Activated CD8-positive, alpha-beta T cell treated with anti-CD3 and anti-CD28 coated beads, Interleukin-2, amount 10 ng/mL, durations not matched to agents 7 days and 5 days (primary cell): ENCODE measurements at regions of chr14 and their contacts with region 1.

Region 1: DNA sequence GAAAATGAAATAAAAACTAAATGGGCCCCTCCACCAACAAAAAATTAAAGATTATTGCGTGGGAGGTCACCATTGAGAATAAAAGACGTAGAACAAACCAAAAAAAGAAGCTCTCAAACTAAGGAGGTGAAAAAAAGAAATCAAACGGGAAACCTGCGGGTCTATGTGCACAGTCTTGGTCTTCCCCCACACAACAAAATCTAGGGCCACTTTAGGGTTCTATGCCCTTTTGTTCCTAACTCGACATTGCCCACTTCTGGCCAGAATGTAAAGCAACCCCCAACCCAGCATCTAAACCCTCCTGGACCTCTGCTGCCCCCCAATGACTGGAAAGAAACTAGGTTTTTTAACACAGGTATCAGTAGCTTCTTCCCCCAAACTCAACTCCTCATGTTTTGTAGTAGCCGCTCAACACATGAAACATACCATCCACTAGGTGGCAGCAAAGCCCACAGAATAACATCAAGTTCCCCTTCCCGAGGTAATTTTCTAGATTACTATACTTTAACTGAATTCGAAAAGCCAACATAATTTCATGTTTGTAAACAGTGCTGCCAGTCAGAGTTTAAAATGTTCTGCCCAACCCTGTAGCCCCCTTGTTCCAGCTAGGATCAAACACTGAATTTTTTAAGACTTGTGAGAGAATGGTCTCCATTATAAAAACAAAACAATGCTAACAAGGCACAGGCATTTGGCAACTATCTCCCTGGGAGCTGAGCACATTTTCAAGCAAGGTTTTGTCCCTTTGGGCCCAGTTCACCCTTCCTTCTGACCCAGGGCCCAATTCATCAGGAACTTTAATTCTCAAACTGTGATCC is 18.7 kb downstream of the DAD1 start:
- DNase-seq: peak; percentile 94
- ATAC-seq: peak; percentile 87
- H3K4me3 Mint-ChIP-seq: peak overlapping the region; percentile 80
- H3K27ac Mint-ChIP-seq: peak overlapping the region; percentile 92
- H3K4me1 Mint-ChIP-seq: peaks cover 62% of the 10 kb centered on the region
- H3K27me3 Mint-ChIP-seq: no peaks in the 10 kb centered on the region

Region 2: DNA sequence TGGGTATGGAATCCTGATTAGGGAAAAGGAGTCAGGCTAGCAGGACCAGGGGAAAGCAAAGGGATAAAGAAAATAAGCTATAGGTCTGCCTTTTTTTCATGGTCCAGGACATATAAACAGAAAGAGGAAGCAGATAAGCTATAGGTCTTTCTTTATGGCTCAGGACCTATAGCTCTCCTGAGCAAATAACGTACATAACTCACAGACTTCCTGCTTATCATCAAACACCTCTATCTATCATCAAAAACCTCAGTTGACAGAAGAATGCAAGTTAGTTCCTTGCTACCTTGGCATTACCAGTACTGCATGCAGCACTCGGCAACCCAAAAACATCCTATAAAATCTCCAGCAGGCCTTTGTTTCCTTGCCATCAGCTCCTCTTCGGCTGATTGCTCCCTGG is 658.0 kb before region 1 on chr14:
- CTCF ChIA-PET with region 1: interaction called, 70 read pairs
- POLR2A ChIA-PET with region 1: interaction called, 15 read pairs
- DNase-seq: no peak
- ATAC-seq: no peak
- H3K4me3 Mint-ChIP-seq: no peak overlapping the region
- H3K27ac Mint-ChIP-seq: no peak overlapping the region
- H3K4me1 Mint-ChIP-seq: peaks cover 38% of the 10 kb centered on the region
- H3K27me3 Mint-ChIP-seq: peaks cover 4% of the 10 kb centered on the region

Region 3: DNA sequence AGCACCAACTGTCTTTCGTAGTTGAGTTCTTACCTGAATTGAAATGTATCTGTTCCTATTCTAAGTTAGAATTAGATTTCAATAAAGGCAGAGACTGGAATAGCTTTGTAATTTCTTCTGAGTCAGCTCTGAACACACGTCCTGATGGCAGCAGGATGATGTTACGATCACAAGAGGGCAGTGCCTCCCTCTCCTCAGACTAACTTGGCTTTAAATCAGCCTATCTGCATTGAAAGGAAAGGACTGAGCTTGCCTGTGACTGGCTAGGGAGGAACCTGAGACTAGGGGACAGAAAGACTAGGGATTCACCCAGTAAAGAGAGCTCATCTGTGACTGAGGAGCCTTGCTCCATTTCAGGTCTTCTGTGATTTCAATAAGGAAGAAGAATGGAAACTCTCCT is 573.0 kb before region 1 on chr14:
- CTCF ChIA-PET with region 1: interaction called, 46 read pairs
- POLR2A ChIA-PET with region 1: interaction called, 5 read pairs
- DNase-seq: peak; percentile 63
- ATAC-seq: peak; percentile 91
- H3K4me3 Mint-ChIP-seq: peak overlapping the region; percentile 87
- H3K27ac Mint-ChIP-seq: peak overlapping the region; percentile 93
- H3K4me1 Mint-ChIP-seq: peaks cover 41% of the 10 kb centered on the region
- H3K27me3 Mint-ChIP-seq: peaks cover 3% of the 10 kb centered on the region

Region 4: DNA sequence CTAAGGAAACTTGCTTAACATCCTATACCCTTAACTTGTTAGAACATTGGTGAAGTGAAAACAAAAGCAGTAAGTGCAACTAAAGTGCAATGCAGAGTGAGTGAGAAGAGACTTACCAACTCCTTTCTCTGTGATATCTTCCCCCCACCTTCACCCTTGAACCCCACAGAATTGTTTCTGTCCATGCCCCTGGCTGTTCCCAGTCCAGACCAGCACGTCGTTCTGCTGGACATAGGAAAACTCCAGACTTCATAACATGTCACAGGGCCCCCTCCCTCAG is 73.3 kb before region 1 on chr14:
- CTCF ChIA-PET with region 1: interaction called, 20 read pairs
- POLR2A ChIA-PET with region 1: interaction called, 9 read pairs
- DNase-seq: no peak
- ATAC-seq: no peak
- H3K4me3 Mint-ChIP-seq: peak overlapping the region; percentile 86
- H3K27ac Mint-ChIP-seq: peak overlapping the region; percentile 93
- H3K4me1 Mint-ChIP-seq: peaks cover 21% of the 10 kb centered on the region
- H3K27me3 Mint-ChIP-seq: no peaks in the 10 kb centered on the region

Region 5: GRCh38 chr14:22536853-22537338 is 33.4 kb before region 1 on chr14:
- CTCF ChIA-PET with region 1: interaction called, 35 read pairs
- POLR2A ChIA-PET with region 1: interaction called, 232 read pairs
- DNase-seq: peak; percentile 87
- ATAC-seq: peak; percentile 85
- H3K4me3 Mint-ChIP-seq: peak overlapping the region; percentile 76
- H3K27ac Mint-ChIP-seq: peak overlapping the region; percentile 98
- H3K4me1 Mint-ChIP-seq: peaks cover 93% of the 10 kb centered on the region
- H3K27me3 Mint-ChIP-seq: no peaks in the 10 kb centered on the region

Region 6: GRCh38 chr14:22766456-22767322 is 196.3 kb after region 1 on chr14 and contains the start of gene OXA1L:
- CTCF ChIA-PET with region 1: interaction called, 28 read pairs
- POLR2A ChIA-PET with region 1: interaction called, 7 read pairs
- DNase-seq: peak; percentile 98
- ATAC-seq: peak; percentile 94
- H3K4me3 Mint-ChIP-seq: peak within 1 kb of the TSS; percentile 93
- H3K27ac Mint-ChIP-seq: peak within 1 kb of the TSS; percentile 97
- H3K4me1 Mint-ChIP-seq: peaks cover 33% of the 10 kb centered on the region
- H3K27me3 Mint-ChIP-seq: no peaks in the 10 kb centered on the region
- total RNA-seq, gene OXA1L: 104 to 107 TPM

Region 7: DNA sequence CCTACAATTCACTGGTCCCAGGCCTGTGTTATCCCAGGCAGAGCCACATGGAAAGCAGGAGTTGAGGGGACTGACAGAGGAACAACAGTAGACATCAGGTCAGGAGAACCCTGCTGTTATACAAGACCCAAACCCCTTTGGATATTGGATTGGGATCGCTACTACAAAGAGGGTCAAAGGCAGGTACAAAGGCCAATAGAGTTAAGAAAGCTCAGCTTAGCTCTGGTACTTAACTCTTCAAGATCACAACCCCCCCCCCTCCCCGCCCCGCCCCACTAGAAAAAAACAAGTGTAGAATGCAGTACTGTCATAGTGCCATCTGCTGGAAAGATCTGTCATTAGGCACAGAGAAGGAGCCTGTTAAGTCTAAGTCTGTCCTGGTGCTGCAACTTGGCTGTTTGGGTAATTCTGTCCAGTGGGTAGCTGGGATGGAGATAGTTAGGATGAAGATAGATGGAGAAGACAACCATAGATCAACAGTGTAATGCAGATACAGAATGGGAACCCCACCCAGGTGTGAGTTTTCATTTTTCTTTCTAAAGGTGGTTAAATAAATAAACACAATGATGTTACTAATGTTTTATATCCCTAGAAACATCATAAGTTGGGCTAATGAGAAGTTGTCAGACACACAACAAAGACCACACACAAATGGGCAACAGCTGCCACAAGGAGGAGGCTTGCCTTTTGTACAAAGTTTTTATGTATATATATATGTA is 329.9 kb after region 1 on chr14:
- CTCF ChIA-PET with region 1: interaction called, 37 read pairs
- POLR2A ChIA-PET with region 1: interaction called, 4 read pairs
- DNase-seq: peak; percentile 68
- ATAC-seq: peak; percentile 75
- H3K4me3 Mint-ChIP-seq: no peak overlapping the region
- H3K27ac Mint-ChIP-seq: peak overlapping the region; percentile 4
- H3K4me1 Mint-ChIP-seq: peaks cover 13% of the 10 kb centered on the region
- H3K27me3 Mint-ChIP-seq: no peaks in the 10 kb centered on the region